Activated CD8-positive, alpha-beta T cell treated with anti-CD3 and anti-CD28 coated beads, Interleukin-2, amount 10 ng/mL, durations not matched to agents 7 days and 5 days (primary cell): ENCODE measurements at regions of chr11 and their contacts with region 1.

Region 1: GRCh38 chr11:46238967-46239800 is 38.3 kb upstream of the CREB3L1 start:
- DNase-seq: peak; percentile 85
- ATAC-seq: peak; percentile 82
- H3K4me3 Mint-ChIP-seq: peak overlapping the region; percentile 65
- H3K27ac Mint-ChIP-seq: no peak overlapping the region
- H3K4me1 Mint-ChIP-seq: peaks cover 46% of the 10 kb centered on the region
- H3K27me3 Mint-ChIP-seq: peaks cover 34% of the 10 kb centered on the region

Region 2: DNA sequence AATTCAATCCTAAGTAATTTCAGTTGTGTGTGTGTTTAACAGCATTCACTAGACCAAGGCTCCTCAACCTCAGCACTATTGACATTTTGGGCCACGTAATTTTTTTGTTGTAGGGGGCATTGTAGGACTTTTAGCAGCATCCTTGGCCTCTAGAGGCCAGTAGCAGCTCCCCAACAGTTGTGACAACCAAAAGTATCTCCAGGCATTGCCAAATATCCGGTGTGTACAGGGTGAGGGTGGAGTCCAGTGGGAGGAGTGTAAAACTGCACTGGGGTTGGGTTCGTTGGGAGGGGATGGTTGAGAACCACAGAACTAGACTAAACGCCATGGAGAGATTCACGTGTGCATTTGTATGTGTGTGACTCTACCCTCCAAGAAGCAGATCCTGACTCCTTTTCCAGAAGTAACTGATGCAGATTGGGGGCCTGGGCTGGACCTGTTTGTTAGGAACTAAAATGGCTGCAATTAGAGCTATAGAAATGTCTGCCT is 112.0 kb before region 1 on chr11:
- CTCF ChIA-PET with region 1: interaction called, 20 read pairs
- POLR2A ChIA-PET with region 1: interaction called, 4 read pairs
- DNase-seq: peak; percentile 81
- ATAC-seq: peak; percentile 99
- H3K4me3 Mint-ChIP-seq: peak overlapping the region; percentile 17
- H3K27ac Mint-ChIP-seq: peak overlapping the region; percentile 74
- H3K4me1 Mint-ChIP-seq: peaks cover 21% of the 10 kb centered on the region
- H3K27me3 Mint-ChIP-seq: no peaks in the 10 kb centered on the region

Region 3: DNA sequence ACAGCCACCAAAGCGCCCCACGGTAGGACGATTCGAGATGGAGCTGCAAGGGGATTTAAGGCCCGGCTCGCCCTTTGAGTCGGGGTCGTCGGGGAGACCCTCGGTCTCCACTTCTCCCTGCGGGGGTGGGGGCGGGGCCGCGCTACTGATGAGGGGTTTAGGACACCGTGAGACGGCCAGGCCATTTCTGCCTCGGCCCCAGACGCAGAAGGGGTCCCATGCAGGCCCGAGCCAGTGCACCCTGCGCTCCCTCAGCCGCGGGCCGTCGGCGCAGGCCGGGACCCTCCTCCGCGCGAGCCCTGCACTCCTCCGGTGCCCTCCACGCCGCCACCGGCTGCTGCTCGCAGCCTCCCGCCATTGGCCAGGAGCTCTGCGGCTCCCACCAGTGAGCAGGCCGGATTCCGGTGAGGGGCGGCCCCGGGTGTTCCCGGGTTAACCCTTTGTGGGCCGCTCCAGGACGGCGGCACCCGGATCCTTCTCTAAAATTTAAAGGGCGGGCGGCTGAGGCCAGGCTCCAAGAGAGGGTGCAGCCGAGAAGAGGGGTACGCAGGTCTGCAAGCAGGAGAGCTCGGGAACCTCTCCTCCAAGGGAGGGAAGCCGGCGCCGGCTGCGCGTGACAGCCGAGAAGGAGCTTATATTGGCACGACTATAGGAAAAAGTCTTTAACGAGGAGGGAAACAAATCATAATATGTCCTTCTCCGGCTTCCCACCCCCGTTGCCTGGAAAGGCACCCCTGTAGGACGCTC is 56.3 kb after region 1 on chr11:
- CTCF ChIA-PET with region 1: interaction called, 32 read pairs
- POLR2A ChIA-PET with region 1: no interaction called
- DNase-seq: peak; percentile 75
- ATAC-seq: peak; percentile 100
- H3K4me3 Mint-ChIP-seq: peak overlapping the region; percentile 79
- H3K27ac Mint-ChIP-seq: no peak overlapping the region
- H3K4me1 Mint-ChIP-seq: peaks cover 7% of the 10 kb centered on the region
- H3K27me3 Mint-ChIP-seq: peaks cover 27% of the 10 kb centered on the region

Region 4: DNA sequence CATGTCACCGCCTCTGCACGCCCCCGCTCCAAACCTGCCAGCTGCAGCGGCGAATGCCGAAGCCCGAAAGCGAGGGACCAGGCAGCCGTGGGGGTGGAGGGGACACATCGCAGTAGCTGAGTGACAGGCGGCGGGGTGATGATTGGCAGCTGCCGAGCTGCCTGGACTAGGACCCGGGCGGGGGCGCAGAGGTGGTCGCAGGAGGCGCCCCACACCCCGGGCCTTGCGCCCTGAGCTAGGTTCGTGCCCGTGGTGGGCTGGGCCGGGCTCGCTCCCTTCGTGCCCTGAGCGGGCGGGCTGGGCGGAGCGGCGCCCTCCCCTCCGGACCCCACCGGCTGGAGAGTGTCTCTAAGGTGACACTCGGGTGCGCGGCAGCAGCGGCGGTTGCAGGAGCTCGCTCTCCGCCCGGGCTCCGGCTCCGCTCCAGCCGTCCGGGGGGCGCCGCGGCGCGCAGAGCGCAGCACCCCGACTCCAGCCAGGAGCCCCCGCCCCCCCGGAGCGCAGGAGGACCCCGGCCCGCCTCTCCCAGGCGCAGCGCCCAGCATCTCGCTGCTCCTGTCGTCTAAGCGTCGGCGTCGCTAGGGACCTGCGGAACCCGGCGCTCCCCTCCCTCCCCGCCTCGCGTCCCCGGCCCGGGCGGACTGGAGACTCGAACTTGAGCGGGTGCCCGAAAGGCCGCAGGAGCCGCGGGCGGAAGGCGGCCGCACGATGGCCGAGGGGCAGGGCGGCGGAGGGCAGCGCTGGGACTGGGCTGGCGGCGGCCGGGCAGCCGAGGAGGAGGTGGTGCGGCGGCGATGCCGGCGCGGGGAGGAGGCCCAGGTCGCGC is 93.6 kb after region 1 on chr11:
- CTCF ChIA-PET with region 1: interaction called, 12 read pairs
- POLR2A ChIA-PET with region 1: interaction called, 3 read pairs
- DNase-seq: no peak
- ATAC-seq: peak; percentile 43
- H3K4me3 Mint-ChIP-seq: peak overlapping the region; percentile 34
- H3K27ac Mint-ChIP-seq: no peak overlapping the region
- H3K4me1 Mint-ChIP-seq: peaks cover 46% of the 10 kb centered on the region
- H3K27me3 Mint-ChIP-seq: peaks cover 47% of the 10 kb centered on the region

Region 5: DNA sequence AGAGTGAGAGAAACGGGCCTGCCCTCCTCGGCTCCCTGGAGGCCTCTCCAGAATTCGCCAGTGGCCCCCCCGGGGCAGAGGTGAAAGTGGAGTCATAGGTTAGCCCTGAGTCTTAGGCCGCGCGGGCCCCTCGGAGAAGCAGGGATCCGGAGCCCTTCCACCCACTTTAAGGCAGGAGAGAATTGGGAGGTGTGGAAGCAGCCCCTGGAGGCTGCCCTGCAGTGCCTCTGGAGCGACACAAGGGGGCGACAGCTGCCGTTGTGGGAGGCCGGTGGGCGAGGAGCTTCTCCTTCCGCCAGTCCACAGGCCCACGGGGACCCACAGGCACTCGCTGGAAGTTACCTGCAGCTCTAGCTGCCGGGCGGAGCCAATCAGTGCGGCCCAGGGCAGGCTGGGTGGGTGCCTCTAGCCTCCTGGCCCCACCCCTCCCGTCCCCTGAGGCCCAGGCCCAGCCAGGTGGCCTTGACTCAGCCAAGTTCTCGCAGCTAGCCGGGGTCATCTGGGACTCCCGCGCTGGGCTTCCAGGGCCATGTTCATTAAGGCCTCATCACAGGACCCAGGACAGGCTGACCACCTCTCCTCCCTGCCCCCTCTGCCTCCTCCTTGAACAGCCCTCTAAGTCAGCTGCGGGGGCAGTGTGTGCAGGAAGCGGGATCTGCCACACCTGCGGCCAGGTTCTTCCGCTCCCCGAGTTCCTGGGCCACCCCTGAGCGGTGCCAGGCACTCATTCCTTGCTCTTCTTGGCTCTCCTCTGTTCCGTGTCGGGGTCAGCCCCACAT is 113.1 kb after region 1 on chr11:
- CTCF ChIA-PET with region 1: interaction called, 24 read pairs
- POLR2A ChIA-PET with region 1: interaction called, 3 read pairs
- DNase-seq: peak; percentile 81
- ATAC-seq: peak; percentile 43
- H3K4me3 Mint-ChIP-seq: peak overlapping the region; percentile 78
- H3K27ac Mint-ChIP-seq: peak overlapping the region; percentile 86
- H3K4me1 Mint-ChIP-seq: peaks cover 73% of the 10 kb centered on the region
- H3K27me3 Mint-ChIP-seq: no peaks in the 10 kb centered on the region